ENCODE measurements at regions of chr7 and their contacts with region 1.

Region 1: DNA sequence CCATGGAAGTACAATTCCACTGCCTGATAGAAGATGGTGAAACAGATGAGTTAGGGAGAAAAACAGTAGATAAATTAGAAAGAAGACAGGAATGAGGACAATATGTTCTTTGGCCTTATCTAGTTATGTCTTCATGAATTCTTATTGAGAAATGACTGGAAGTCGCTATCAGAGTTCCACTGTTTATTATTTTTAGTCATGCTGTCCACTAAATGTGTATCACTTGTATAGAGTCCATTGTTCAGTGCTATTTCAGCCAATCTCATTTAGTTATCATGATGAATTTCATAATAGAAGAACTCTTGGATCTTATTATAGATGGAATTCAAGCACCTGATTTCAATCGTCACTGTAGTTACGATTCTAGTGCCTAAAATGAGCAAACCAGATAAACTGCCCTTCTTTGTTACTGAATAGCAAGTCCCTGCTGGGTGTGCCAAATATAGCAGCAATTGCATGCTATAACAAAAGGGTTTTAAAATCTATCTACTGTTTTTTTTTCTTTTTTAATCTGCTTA is 177.7 kb upstream of the COL1A2 start:
- DNase-seq: no peak
- ATAC-seq: no peak
- H3K4me3 ChIP-seq: no peak overlapping the region
- H3K4me3 Mint-ChIP-seq: no peak overlapping the region
- H3K27ac ChIP-seq: no peak overlapping the region
- H3K27ac Mint-ChIP-seq: no peak overlapping the region
- H3K4me1 ChIP-seq: no peaks in the 10 kb centered on the region
- H3K4me1 Mint-ChIP-seq: no peaks in the 10 kb centered on the region
- H3K27me3 ChIP-seq: no peaks in the 10 kb centered on the region
- H3K27me3 Mint-ChIP-seq: peaks cover 0 to 4% (median 0%) of the 10 kb centered on the region in 5 donors

Region 2: GRCh38 chr7:94228678-94229077 is 11.7 kb after region 1 on chr7:
- CTCF ChIA-PET with region 1: no interaction called
- POLR2A ChIA-PET with region 1: no interaction called
- intact Hi-C with region 1: loop called in 1 of 2 experiments (anchors 1 kb)
- DNase-seq: no peak
- ATAC-seq: no peak
- H3K4me3 ChIP-seq: no peak overlapping the region
- H3K4me3 Mint-ChIP-seq: no peak overlapping the region
- H3K27ac ChIP-seq: no peak overlapping the region
- H3K27ac Mint-ChIP-seq: no peak overlapping the region
- H3K4me1 ChIP-seq: no peaks in the 10 kb centered on the region
- H3K4me1 Mint-ChIP-seq: no peaks in the 10 kb centered on the region
- H3K27me3 ChIP-seq: no peaks in the 10 kb centered on the region
- H3K27me3 Mint-ChIP-seq: peaks cover 0 to 8% (median 5%) of the 10 kb centered on the region in 5 donors